Dorsolateral prefrontal cortex (tissue), 120 donors: ENCODE measurements at regions of chr1 and their contacts with region 1.

Region 1: GRCh38 chr1:145918144-145918992 is at the start of gene PEX11B:
- DNase-seq: peak; percentile 84 to 93 (median 89)
- H3K4me3 ChIP-seq: peak within 1 kb of the TSS; percentile 52 to 99 (median 91)
- H3K27ac ChIP-seq: peak within 1 kb of the TSS; percentile 46 to 98 (median 93)
- H3K27me3 ChIP-seq: no peaks in the 10 kb centered on the region
- CTCF ChIP-seq: peak in 13 of 56 donors; percentile 2 to 47 (median 15)
- total RNA-seq, gene PEX11B: 25.0 to 72.0 (median 54.2) TPM

Region 2: DNA sequence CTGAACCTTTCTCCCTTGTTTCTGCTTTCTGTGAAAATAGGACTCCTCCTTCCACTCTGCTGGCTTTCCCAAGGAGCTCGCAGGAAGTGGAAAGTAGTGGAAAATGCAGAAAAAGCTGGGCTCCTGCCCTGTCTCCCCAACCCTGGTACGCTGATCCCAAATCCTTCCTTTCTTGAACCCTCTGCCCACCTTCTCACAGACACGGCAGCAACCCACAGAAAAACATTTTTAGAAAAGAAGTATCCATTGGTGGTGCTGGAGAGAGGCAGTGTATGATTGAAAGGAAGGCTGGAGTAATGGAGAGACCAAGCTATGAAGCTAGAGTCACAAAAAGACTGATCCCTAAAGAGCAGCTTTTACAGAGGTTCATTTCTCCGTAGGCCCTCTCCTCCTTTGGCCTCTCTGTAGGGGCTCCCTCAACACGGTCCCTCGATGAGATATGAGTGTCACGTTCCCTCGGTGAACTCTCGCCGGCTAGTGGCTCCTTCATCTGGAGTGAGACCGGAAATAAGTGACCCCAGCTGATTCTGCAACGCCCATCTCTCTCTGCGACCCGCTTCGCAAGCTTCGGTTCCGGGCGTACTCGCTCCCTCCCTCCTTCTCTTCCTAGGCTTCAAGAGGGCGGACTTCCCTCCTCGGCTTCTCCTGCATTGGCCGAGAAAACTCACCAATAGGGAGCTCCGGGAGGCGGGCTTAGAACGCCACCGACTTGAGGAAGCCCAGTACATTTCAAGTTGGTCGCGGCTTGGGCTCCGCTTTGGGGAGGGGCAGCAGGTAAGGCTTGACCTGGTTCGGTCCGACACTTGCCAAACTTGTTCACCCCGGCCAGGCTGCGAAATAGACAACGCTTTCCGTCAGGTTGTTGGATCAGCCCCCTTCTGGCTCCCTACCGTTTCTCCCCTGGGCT is 45.9 kb after region 1 on chr1 and contains the starts of genes ANKRD34A and POLR3GL:
- intact Hi-C with region 1: loop called (anchors 2 kb)
- DNase-seq: peak; percentile 83 to 98 (median 96)
- H3K4me3 ChIP-seq: peak within 1 kb of the TSS; percentile 45 to 100 (median 77)
- H3K27ac ChIP-seq: peak within 1 kb of the TSS; percentile 76 to 99 (median 95)
- H3K27me3 ChIP-seq: no peaks in the 10 kb centered on the region
- CTCF ChIP-seq: peak in 33 of 56 donors; percentile 6 to 59 (median 35)
- total RNA-seq, gene ANKRD34A: 13.4 to 48.3 (median 29.4) TPM
- total RNA-seq, gene POLR3GL: 13.1 to 24.6 (median 19.0) TPM